Heart right ventricle (tissue), 16 donors: ENCODE measurements at regions of chr5 and their contacts with region 1.

Region 1: GRCh38 chr5:141524604-141525597 is 36.0 kb downstream of the PCDHGC5 start:
- DNase-seq: peak; percentile 84 to 91
- ATAC-seq: peak; percentile 64 to 76 (median 72)
- H3K4me3 ChIP-seq: no peak overlapping the region
- H3K27ac ChIP-seq: peak overlapping the region in 9 of 10 donors; percentile 52 to 94 (median 71)
- H3K4me1 ChIP-seq: peaks cover 16 to 87% (median 75%) of the 10 kb centered on the region in 9 donors
- H3K27me3 ChIP-seq: no peaks in the 10 kb centered on the region
- CTCF ChIP-seq: peak; percentile 98 to 100 (median 99)

Region 2: DNA sequence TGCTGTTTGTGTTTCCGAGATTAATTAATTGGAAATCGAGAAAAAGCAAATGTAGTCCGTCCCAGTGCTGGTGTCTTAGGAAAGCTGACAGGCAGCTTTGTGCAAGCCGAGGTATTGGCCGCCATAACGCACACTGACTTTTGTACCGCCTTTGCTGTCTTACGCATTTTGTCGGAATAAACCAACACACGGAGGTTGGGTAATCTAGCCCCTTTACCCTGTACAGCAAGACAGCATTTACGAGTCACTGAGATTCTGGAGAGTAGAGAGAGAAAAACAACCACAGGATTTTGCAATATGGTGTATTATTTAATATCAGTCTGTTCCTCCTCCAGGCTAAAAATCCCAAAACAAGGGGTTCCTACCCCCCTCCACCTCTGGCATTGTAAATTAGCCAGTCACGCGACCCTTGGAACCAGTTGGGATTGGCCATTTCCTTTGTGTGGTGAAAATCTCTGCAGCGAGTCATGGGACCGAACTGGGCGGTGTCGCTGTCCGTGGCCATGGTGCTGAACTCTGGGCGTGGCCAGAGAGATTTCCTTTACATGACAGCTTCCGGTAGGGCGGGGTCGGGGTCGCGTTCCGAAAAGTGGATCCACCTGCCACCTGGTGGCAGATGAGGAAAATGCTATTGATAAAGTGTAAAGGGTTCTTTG is 484.0 kb before region 1 on chr5:
- intact Hi-C with region 1: no loop called
- DNase-seq: peak; percentile 85 to 92
- ATAC-seq: peak; percentile 95 to 98 (median 97)
- H3K4me3 ChIP-seq: peak overlapping the region in 9 of 10 donors; percentile 23 to 56 (median 36)
- H3K27ac ChIP-seq: peak overlapping the region in 2 of 10 donors; percentile 30 to 40
- H3K4me1 ChIP-seq: peaks cover 0 to 13% (median 8%) of the 10 kb centered on the region in 9 donors
- H3K27me3 ChIP-seq: peaks cover 0 to 34% (median 12%) of the 10 kb centered on the region in 7 donors
- CTCF ChIP-seq: peak; percentile 37 to 82 (median 69)

Region 3: GRCh38 chr5:141269195-141269594 is 255.7 kb before region 1 on chr5:
- intact Hi-C with region 1: no loop called
- DNase-seq: no peak
- ATAC-seq: no peak
- H3K4me3 ChIP-seq: no peak overlapping the region
- H3K27ac ChIP-seq: no peak overlapping the region
- H3K4me1 ChIP-seq: no peaks in the 10 kb centered on the region
- H3K27me3 ChIP-seq: no peaks in the 10 kb centered on the region
- CTCF ChIP-seq: no peak

Region 4: GRCh38 chr5:141412854-141413539 is 111.9 kb before region 1 on chr5 and contains the start of gene PCDHGA10:
- intact Hi-C with region 1: loop called in 7 of 10 experiments (anchors 1 to 10 kb)
- DNase-seq: no peak
- ATAC-seq: peak in 6 of 8 donors; percentile 55 to 65 (median 60)
- H3K4me3 ChIP-seq: peak within 1 kb of the TSS in 9 of 10 donors; percentile 5 to 48 (median 34)
- H3K27ac ChIP-seq: peak within 1 kb of the TSS in 4 of 10 donors; percentile 1 to 24 (median 8)
- H3K4me1 ChIP-seq: peaks cover 0 to 19% (median 0%) of the 10 kb centered on the region in 9 donors
- H3K27me3 ChIP-seq: peaks cover 0 to 96% (median 0%) of the 10 kb centered on the region in 7 donors
- CTCF ChIP-seq: peak; percentile 18 to 59 (median 52)
- total RNA-seq, gene PCDHGA10: 4.3 to 7.8 (median 6.7) TPM

Region 5: DNA sequence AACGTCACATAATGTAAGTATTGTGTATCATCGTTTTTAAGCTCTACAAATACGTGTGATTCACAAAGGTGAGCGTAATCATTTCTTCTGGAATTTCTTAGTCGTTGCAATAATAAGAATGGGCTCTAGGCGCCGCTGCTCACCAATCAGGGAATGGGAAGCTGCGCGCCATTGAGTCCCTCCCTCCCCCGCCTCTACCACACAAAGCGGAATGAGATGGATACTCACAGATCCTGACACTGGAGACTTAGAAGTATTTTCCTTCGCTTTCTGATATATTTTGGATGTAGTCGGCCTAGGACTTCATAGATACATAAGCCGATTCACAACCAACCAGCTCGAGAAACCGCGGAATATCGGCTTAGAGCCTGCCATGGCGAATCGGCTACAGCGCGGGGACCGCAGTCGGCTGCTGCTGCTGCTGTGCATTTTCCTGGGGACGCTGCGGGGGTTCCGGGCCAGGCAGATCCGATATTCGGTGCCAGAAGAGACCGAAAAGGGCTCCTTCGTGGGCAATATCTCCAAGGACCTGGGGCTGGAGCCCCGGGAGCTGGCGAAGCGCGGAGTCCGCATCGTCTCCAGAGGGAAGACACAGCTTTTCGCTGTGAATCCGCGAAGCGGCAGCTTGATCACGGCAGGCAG is 103.9 kb before region 1 on chr5 and contains the start of gene PCDHGA11:
- intact Hi-C with region 1: loop called in 9 of 10 experiments (anchors 1 to 10 kb)
- DNase-seq: no peak
- ATAC-seq: peak in 4 of 8 donors; percentile 34 to 60 (median 42)
- H3K4me3 ChIP-seq: peak within 1 kb of the TSS in 9 of 10 donors; percentile 6 to 42 (median 34)
- H3K27ac ChIP-seq: no peak within 1 kb of the TSS
- H3K4me1 ChIP-seq: peaks cover 0 to 25% (median 6%) of the 10 kb centered on the region in 9 donors
- H3K27me3 ChIP-seq: peaks cover 0 to 99% (median 0%) of the 10 kb centered on the region in 7 donors
- CTCF ChIP-seq: peak; percentile 23 to 60 (median 49)
- total RNA-seq, gene PCDHGA11: 3.3 to 8.5 (median 5.4) TPM

Region 6: GRCh38 chr5:141430332-141431113 is 94.4 kb before region 1 on chr5 and contains the start of gene PCDHGA12:
- intact Hi-C with region 1: loop called in 7 of 10 experiments (anchors 2 to 10 kb)
- DNase-seq: peak in 1 of 2 donors; percentile 69
- ATAC-seq: peak; percentile 69 to 92 (median 90)
- H3K4me3 ChIP-seq: peak within 1 kb of the TSS in 9 of 10 donors; percentile 24 to 52 (median 40)
- H3K27ac ChIP-seq: peak within 1 kb of the TSS in 7 of 10 donors; percentile 5 to 52 (median 31)
- H3K4me1 ChIP-seq: peaks cover 0 to 22% (median 0%) of the 10 kb centered on the region in 9 donors
- H3K27me3 ChIP-seq: peaks cover 0 to 78% (median 0%) of the 10 kb centered on the region in 7 donors
- CTCF ChIP-seq: peak; percentile 6 to 69 (median 60)
- total RNA-seq, gene PCDHGA12: 5.4 to 9.2 (median 6.1) TPM

Region 7: DNA sequence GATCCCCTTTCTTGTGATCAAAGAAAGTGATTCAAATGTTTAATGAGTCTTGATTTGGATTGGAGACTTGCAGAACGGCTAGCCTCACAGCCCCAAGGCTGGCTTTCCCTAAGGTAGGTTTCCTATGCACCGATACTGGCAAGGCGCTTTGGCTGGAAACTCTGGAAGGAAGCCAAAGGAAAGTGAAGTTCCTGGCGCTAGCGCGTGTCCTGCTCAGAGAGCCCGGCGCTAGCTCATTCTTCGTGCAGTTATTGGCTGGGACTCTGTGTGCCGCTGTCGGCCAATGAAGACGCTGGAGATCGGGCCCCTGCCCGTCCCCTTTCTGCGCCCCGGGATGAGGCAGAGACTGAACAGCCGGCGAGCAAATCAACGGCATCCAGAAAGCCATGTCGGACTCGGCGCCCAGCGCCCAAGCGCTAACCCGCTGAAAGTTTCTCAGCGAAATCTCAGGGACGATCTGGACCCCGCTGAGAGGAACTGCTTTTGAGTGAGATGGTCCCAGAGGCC is 49.2 kb before region 1 on chr5 and contains the start of gene PCDHGC3:
- intact Hi-C with region 1: loop called in 6 of 10 experiments (anchors 1 to 5 kb)
- DNase-seq: peak; percentile 88 to 94
- ATAC-seq: peak; percentile 96 to 99 (median 99)
- H3K4me3 ChIP-seq: peak within 1 kb of the TSS; percentile 51 to 80 (median 62)
- H3K27ac ChIP-seq: peak within 1 kb of the TSS; percentile 67 to 93 (median 87)
- H3K4me1 ChIP-seq: peaks cover 7 to 55% (median 43%) of the 10 kb centered on the region in 9 donors
- H3K27me3 ChIP-seq: peaks cover 0 to 51% (median 0%) of the 10 kb centered on the region in 7 donors
- CTCF ChIP-seq: peak in 6 of 9 donors; percentile 52 to 68 (median 60)
- total RNA-seq, gene PCDHGC3: 12.8 to 19.5 (median 15.9) TPM

Region 8: GRCh38 chr5:141512390-141512910 is 12.5 kb before region 1 on chr5:
- intact Hi-C with region 1: loop called in 1 of 10 experiments (anchors 2 kb)
- DNase-seq: peak; percentile 83 to 85
- ATAC-seq: peak; percentile 3 to 33 (median 27)
- H3K4me3 ChIP-seq: peak overlapping the region; percentile 12 to 68 (median 56)
- H3K27ac ChIP-seq: peak overlapping the region in 9 of 10 donors; percentile 82 to 95 (median 86)
- H3K4me1 ChIP-seq: peaks cover 26 to 85% (median 69%) of the 10 kb centered on the region in 9 donors
- H3K27me3 ChIP-seq: no peaks in the 10 kb centered on the region
- CTCF ChIP-seq: peak; percentile 76 to 91 (median 84)